Pancreas (tissue), 10 donors: ENCODE measurements at regions of chr17 and their contacts with region 1.

Region 1: DNA sequence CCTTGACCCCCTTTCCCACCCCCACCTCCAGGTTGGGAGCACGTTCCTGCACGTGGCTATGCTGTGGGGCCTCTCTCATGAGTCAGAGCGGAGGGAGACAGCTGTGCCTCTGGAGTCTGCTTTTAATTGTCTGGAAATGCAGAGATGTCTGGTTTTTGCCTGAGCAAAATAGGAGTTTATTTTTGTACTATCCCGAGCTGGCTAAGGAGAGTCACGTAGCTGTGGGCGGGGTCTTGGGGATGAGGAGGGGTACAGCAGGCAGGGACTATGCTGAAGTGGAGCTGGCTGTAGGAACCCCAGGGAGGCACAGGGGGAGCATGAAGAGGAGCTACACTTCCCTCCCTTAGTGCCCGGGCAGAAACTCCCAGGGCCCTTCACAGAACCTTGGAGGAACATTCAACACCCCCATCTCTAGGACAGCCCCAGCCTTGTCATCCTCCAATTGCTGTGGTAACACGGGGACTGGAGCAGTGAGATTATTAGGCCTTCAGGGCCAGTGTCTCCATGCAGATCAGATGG is 44.7 kb upstream of the LGALS9 start:
- DNase-seq: no peak
- ATAC-seq: peak in 1 of 4 donors; percentile 11
- H3K4me3 ChIP-seq: no peak overlapping the region
- H3K27ac ChIP-seq: no peak overlapping the region
- H3K4me1 ChIP-seq: no peaks in the 10 kb centered on the region
- H3K27me3 ChIP-seq: no peaks in the 10 kb centered on the region
- CTCF ChIP-seq: no peak

Region 2: DNA sequence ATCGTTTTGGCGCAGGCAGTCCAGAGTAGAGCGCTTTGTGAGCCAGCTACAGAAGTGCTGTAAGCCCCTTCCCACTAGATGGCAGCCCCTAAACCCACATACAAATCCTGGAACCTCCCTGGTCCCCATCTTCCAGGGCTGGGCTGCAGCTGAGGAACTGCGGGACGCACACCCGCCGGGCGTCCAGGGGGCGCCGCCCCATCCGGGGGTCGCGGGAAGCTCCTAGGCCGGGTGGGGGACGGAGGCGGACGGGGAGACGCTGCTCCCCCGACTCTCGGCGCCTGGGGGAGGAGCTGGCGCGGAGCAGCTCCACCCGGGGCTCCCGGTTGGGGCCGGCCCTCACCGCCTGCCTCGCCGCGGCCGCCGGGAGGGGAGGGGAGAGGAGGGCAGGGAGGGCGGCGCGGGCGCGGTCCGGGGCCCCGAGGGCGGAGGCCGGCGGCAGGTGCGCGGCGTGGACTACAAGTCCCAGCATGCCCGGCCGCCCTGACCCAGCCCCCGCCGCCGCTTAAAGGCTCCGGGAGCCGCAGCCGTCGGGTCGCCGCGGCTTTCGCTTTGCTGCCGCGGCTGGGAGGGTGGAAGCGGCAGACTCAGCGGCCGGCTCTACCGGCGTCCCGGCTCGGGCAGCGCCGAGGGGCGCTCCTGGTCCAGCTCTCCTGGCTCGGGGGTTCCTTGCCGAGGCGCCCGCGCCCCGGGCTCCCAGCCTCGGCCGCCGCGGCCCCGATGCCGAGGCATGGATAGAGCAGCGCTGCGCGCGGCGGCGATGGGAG is 130.2 kb before region 1 on chr17 and contains the start of gene KSR1:
- intact Hi-C with region 1: loop called in 1 of 3 experiments (anchors 10 kb)
- DNase-seq: peak; percentile 82 to 96 (median 90)
- ATAC-seq: peak; percentile 84 to 94 (median 92)
- H3K4me3 ChIP-seq: peak within 1 kb of the TSS; percentile 72 to 86 (median 80)
- H3K27ac ChIP-seq: peak within 1 kb of the TSS; percentile 25 to 69 (median 52)
- H3K4me1 ChIP-seq: peaks cover 0 to 21% (median 11%) of the 10 kb centered on the region in 3 donors
- H3K27me3 ChIP-seq: no peaks in the 10 kb centered on the region
- CTCF ChIP-seq: no peak
- total RNA-seq, gene KSR1: 68.2 to 134 (median 103) TPM

Region 3: GRCh38 chr17:27532269-27533263 is 53.7 kb before region 1 on chr17:
- intact Hi-C with region 1: loop called in 1 of 3 experiments (anchors 10 kb)
- DNase-seq: peak in 4 of 6 donors; percentile 66 to 86 (median 74)
- ATAC-seq: peak; percentile 32 to 69 (median 50)
- H3K4me3 ChIP-seq: no peak overlapping the region
- H3K27ac ChIP-seq: peak overlapping the region; percentile 41 to 80 (median 73)
- H3K4me1 ChIP-seq: peaks cover 67 to 83% (median 76%) of the 10 kb centered on the region in 3 donors
- H3K27me3 ChIP-seq: no peaks in the 10 kb centered on the region
- CTCF ChIP-seq: no peak